Activated CD4-positive, alpha-beta memory T cell treated with anti-CD3 and anti-CD28 coated beads, Interleukin-2, amount 10 ng/mL, durations not matched to agents 7 days and 5 days (primary cell): ENCODE measurements at regions of chr13 and their contacts with region 1.

Region 1: DNA sequence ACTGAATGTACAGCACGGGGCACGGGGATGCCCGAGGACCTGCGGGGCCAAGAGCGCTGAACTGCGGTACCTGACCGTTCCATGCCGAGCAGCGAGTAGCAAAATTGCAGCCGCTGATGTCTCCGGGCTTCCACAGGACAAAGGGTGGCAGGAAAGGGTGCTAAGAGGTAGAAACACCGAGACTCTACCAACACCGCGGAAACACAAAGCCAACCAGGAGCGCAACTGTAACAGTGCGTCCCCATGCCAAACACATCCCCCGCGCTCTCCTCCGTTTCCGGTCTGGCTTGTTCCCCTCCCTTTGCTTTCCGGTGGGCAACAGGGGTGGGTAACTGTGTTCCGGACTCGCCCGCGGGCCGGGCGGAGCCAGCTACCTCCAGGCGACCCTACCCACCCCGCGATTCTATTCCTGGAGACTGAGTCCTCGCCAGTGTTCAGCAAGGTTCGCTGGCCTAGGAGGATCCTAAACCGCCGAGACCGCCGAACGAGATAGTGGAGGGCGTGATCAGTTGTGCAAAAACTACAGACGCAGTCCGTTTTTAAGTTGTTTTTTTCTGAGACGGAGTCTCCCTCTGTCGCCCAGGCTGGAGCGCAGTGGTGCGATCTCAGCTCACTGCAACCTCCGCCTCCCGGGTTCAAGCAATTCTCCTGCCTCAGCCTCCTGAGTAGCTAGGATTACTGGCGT is 34.9 kb upstream of the NEK3 start:
- DNase-seq: peak; percentile 90
- H3K4me3 Mint-ChIP-seq: peak overlapping the region; percentile 95
- H3K27ac Mint-ChIP-seq: peak overlapping the region; percentile 97
- H3K4me1 Mint-ChIP-seq: peaks cover 33% of the 10 kb centered on the region
- H3K27me3 Mint-ChIP-seq: no peaks in the 10 kb centered on the region

Region 2: DNA sequence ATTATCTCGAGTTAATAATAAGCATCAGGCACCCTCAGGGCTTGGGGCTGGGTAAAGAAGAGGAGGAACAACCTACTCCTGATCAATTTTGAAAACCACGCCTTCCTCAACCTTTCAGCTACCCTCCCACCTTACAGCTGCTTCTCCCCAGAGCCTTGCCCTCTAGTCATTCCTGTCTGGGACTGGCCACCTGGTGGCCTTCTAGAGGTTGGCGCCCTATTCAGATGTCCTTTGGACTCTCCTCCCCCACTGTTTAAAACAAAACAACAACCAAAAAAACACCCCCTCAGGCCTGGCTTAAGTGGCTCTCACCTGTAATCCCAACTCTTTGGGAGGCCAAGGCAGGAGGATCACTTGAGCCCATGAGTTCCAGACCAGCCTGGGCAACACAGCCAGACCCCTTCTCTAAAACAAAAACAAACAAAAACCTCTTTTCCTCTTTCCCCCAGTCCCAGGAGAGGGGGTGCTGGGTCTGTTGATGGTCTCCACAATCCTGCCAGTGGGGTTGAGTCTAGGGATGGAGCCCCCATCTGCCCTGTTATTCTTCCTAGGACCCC is 270.3 kb before region 1 on chr13:
- CTCF ChIA-PET with region 1: no interaction called
- POLR2A ChIA-PET with region 1: no interaction called
- DNase-seq: peak; percentile 25
- H3K4me3 Mint-ChIP-seq: no peak overlapping the region
- H3K27ac Mint-ChIP-seq: peak overlapping the region; percentile 36
- H3K4me1 Mint-ChIP-seq: peaks cover 43% of the 10 kb centered on the region
- H3K27me3 Mint-ChIP-seq: peaks cover 2% of the 10 kb centered on the region

Region 3: GRCh38 chr13:52159321-52160086 is 34.8 kb before region 1 on chr13 and contains the start of gene NEK3:
- CTCF ChIA-PET with region 1: interaction called, 4 read pairs
- POLR2A ChIA-PET with region 1: interaction called, 25 read pairs
- DNase-seq: peak; percentile 70
- H3K4me3 Mint-ChIP-seq: peak within 1 kb of the TSS; percentile 80
- H3K27ac Mint-ChIP-seq: peak within 1 kb of the TSS; percentile 76
- H3K4me1 Mint-ChIP-seq: peaks cover 53% of the 10 kb centered on the region
- H3K27me3 Mint-ChIP-seq: peaks cover 4% of the 10 kb centered on the region
- total RNA-seq, gene NEK3: 8.1 to 12.9 TPM

Region 4: DNA sequence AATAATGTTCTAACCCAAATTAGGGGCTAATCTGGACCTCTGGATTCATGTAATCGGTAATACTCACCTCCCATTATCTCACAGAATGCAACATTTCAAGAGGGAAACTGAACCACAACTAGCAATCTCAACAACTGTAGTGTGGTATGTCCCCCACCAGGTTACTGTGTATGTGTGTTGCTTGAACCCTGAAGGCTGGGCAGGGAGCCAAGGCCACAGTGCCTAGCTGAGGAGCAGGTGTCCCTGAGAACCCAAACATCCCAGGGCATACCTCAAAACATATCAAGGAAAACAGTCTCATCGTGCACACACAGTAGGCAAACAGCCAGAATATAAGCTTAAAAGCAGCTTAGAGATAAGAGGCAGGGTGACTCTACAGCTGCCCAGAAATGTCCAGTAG is 14.4 kb before region 1 on chr13:
- CTCF ChIA-PET with region 1: no interaction called
- POLR2A ChIA-PET with region 1: no interaction called
- DNase-seq: no peak
- H3K4me3 Mint-ChIP-seq: no peak overlapping the region
- H3K27ac Mint-ChIP-seq: no peak overlapping the region
- H3K4me1 Mint-ChIP-seq: peaks cover 3% of the 10 kb centered on the region
- H3K27me3 Mint-ChIP-seq: no peaks in the 10 kb centered on the region